Common myeloid progenitor, CD34-positive (primary cell): ENCODE measurements at regions of chr5 and their contacts with region 1.

Region 1: GRCh38 chr5:147369742-147370374 is 135.0 kb downstream of the STK32A start:
- DNase-seq: peak in 2 of 3 donors; percentile 12 to 18
- H3K4me3 ChIP-seq: no peak overlapping the region
- H3K27ac ChIP-seq: no peak overlapping the region
- H3K4me1 ChIP-seq: peaks cover 0 to 5% (median 0%) of the 10 kb centered on the region in 4 experiments
- H3K27me3 ChIP-seq: no peaks in the 10 kb centered on the region

Region 2: GRCh38 chr5:147223948-147224791 is 145.7 kb before region 1 on chr5:
- CTCF ChIA-PET with region 1: interaction called, 18 read pairs
- POLR2A ChIA-PET with region 1: no interaction called
- DNase-seq: peak; percentile 21 to 57 (median 44)
- H3K4me3 ChIP-seq: no peak overlapping the region
- H3K27ac ChIP-seq: no peak overlapping the region
- H3K4me1 ChIP-seq: peaks cover 0 to 10% (median 6%) of the 10 kb centered on the region in 4 experiments
- H3K27me3 ChIP-seq: no peaks in the 10 kb centered on the region

Region 3: DNA sequence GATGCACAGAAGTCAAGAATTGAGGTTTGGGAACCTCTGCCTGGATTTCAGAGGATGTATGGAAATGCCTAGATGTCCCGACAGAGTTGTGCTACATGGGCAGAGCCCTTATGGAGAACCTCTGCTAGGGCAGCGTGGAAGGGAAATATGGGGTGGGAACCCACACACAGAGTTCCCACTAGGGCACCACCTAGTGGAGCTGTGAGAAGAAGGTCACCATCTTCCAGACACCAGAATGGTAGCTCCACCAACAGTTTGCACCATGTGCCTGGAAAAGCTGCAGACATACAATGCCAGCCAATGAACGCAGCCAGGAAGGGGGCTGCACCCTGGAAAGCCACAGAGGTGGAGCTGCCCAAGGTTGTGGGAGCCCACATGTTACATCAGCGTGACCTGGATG is 30.5 kb before region 1 on chr5:
- CTCF ChIA-PET with region 1: no interaction called
- POLR2A ChIA-PET with region 1: no interaction called
- DNase-seq: no peak
- H3K4me3 ChIP-seq: no peak overlapping the region
- H3K27ac ChIP-seq: no peak overlapping the region
- H3K4me1 ChIP-seq: no peaks in the 10 kb centered on the region
- H3K27me3 ChIP-seq: peaks cover 0 to 3% (median 0%) of the 10 kb centered on the region in 5 experiments

Region 4: DNA sequence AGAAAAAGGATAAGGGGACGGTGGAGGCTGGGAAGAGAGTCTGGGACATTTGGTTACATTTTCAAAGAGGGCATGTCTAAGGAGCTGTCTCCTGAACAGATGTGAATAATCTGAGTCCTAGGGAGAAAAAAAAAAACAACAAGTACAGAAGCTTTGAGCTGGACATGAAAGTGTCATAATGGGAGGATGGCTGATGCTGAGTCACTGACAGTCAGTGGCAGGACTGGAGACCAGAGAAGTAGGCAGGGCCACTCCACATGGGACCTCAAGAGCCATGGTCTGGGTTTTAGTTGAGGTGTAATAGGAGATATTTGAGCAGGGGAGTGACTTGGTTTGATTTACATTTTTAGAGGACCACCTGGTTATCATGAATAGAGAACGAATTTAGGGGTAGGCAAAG is 69.4 kb after region 1 on chr5:
- CTCF ChIA-PET with region 1: no interaction called
- POLR2A ChIA-PET with region 1: no interaction called
- DNase-seq: no peak
- H3K4me3 ChIP-seq: no peak overlapping the region
- H3K27ac ChIP-seq: no peak overlapping the region
- H3K4me1 ChIP-seq: peaks cover 2 to 31% (median 15%) of the 10 kb centered on the region in 4 experiments
- H3K27me3 ChIP-seq: no peaks in the 10 kb centered on the region

Region 5: GRCh38 chr5:147809830-147810666 is 440.2 kb after region 1 on chr5:
- CTCF ChIA-PET with region 1: no interaction called
- POLR2A ChIA-PET with region 1: no interaction called
- DNase-seq: no peak
- H3K4me3 ChIP-seq: no peak overlapping the region
- H3K27ac ChIP-seq: no peak overlapping the region
- H3K4me1 ChIP-seq: peaks cover 0 to 8% (median 5%) of the 10 kb centered on the region in 4 experiments
- H3K27me3 ChIP-seq: no peaks in the 10 kb centered on the region